H1 (cell line): ENCODE measurements at regions of chr2 and their contacts with region 1.

Region 1: DNA sequence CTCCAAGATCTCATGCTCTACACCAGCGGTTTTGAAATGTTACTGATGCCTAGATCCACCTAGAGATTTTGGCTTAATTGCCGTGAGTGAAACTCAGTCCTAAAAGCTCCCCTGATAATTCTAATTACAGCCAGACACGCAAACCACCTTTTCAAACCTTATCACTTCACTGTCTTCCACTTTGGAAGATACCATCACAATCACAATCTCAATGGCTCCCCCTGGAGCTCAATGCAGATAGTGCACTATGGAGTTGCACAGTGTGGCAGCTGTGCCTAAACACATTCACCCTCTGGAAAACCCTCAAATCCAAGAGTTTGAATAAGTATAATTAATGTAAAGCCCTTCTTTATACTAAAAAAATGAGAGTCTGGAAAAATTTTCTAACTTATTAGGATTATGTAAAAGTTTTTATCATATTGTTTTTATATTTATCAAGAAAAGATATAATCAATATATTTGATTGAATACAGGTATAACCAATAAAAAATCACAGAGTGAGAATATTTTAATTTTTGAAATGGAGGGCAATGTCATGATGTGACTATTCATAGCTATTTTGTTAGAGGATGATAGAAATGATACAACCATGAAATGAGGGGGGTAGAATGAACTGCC is 102.9 kb upstream of the SLC8A1 start:
- DNase-seq: peak; percentile 21 to 88
- H3K4me3 ChIP-seq: no peak overlapping the region
- H3K27ac ChIP-seq: no peak overlapping the region
- H3K4me1 ChIP-seq: no peaks in the 10 kb centered on the region
- H3K27me3 ChIP-seq: no peaks in the 10 kb centered on the region
- CTCF ChIP-seq: peak; percentile 48 to 86 (median 73)
- EP300 ChIP-seq: no peak
- POLR2A ChIP-seq: no peak
- RAD21 ChIP-seq: peak; percentile 80 to 85

Region 2: GRCh38 chr2:40448468-40449079 is 106.2 kb before region 1 on chr2:
- CTCF ChIA-PET with region 1: interaction called, 42 read pairs
- POLR2A ChIA-PET with region 1: no interaction called
- DNase-seq: no peak
- H3K4me3 ChIP-seq: no peak overlapping the region
- H3K27ac ChIP-seq: no peak overlapping the region
- H3K4me1 ChIP-seq: peaks cover 3 to 12% (median 4%) of the 10 kb centered on the region in 4 experiments; a peak in 6 of 7 replicates
- H3K27me3 ChIP-seq: peaks cover 5 to 35% (median 24%) of the 10 kb centered on the region in 4 experiments; a peak in 6 of 7 replicates
- CTCF ChIP-seq: peak in 2 of 3 experiments; percentile 62 to 76; a peak in 3 of 4 replicates
- EP300 ChIP-seq: no peak
- POLR2A ChIP-seq: no peak
- RAD21 ChIP-seq: peak; percentile 61 to 74

Region 3: GRCh38 chr2:40543381-40543780 is 11.4 kb before region 1 on chr2:
- CTCF ChIA-PET with region 1: interaction called, 14 read pairs
- POLR2A ChIA-PET with region 1: no interaction called
- DNase-seq: no peak
- H3K4me3 ChIP-seq: no peak overlapping the region
- H3K27ac ChIP-seq: no peak overlapping the region
- H3K4me1 ChIP-seq: peaks cover 0 to 7% (median 6%) of the 10 kb centered on the region in 4 experiments; a peak in 3 of 7 replicates
- H3K27me3 ChIP-seq: no peaks in the 10 kb centered on the region
- CTCF ChIP-seq: no peak
- EP300 ChIP-seq: no peak
- POLR2A ChIP-seq: no peak
- RAD21 ChIP-seq: no peak

Region 4: GRCh38 chr2:40841856-40842255 is 287.1 kb after region 1 on chr2:
- CTCF ChIA-PET with region 1: no interaction called
- POLR2A ChIA-PET with region 1: no interaction called
- DNase-seq: no peak
- H3K4me3 ChIP-seq: no peak overlapping the region
- H3K27ac ChIP-seq: no peak overlapping the region
- H3K4me1 ChIP-seq: no peaks in the 10 kb centered on the region
- H3K27me3 ChIP-seq: no peaks in the 10 kb centered on the region
- CTCF ChIP-seq: no peak
- EP300 ChIP-seq: no peak
- POLR2A ChIP-seq: no peak
- RAD21 ChIP-seq: no peak